ENCODE measurements at regions of chr11 and their contacts with region 1.

Region 1: DNA sequence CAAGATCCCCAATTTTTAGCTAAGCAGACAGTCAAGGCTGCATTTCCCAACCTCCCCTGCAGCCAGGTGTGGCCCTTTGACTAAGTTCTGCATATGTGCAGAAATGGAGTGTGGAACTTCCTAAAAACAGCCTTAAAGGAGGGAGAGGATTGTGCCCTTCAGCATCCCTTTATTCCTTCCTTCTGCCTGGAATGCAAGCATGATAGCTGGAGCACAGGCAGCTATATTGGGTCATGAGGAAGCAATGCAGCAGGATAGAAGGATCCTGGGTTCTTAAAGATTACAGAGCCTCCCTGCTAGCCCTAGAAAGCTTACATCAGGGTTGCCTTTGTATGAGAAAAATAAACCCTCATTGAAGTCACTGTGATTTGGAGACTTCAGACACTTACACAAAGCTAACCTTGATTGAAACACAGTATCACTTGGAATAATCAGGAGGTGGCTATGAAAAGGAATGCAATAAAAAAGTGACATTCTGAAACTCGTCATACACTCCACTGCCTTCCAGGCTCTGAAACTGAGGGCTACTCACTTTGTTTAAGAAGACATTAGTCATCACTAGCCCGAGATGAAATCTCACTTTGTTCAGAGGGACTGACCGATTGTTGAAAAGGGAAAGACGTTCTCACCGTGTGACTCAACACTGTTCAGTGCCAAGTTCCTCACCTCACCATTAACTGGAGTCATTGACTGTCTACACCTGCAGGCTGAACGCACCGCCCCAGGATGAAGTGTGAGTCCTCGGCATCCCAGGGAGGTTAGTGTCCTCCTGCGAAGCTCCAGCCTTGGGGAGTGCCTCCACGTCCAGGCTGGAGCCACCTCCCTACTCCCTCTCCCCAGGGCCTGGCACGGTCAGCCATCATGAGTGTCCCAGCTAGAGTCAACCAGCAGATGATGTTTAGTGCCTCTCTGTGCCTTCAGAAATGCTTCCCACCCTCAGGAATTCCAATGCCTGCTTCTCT is 30.2 kb downstream of the FADD start:
- DNase-seq: peak; percentile 96 to 100
- H3K4me3 ChIP-seq: no peak overlapping the region
- H3K27ac ChIP-seq: peak overlapping the region; percentile 97
- H3K4me1 ChIP-seq: peaks cover 24% of the 10 kb centered on the region
- H3K27me3 ChIP-seq: no peaks in the 10 kb centered on the region
- CTCF ChIP-seq: no peak

Region 2: DNA sequence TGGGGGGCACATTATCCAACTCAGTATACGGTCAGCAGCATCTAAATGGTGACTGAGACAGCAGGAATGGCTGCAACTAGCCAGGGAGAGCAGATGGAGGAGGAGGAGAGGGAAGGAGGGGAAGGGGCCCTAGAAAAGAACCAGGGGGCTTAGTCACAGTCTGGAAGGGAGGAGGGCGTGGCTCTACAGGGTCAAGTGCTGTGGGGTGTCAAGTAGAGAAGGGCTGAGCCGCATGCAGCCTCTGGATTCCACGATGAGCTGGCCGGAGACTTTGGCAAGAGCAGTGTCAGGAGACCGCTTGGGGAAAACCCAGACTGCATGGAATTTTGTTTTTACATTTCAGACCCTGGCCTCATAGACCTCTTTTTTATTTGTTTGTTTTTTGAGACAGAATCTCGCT is 11.4 kb after region 1 on chr11:
- CTCF ChIA-PET with region 1: no interaction called
- POLR2A ChIA-PET with region 1: interaction called, 7 read pairs
- intact Hi-C with region 1: loop called (anchors 1 kb)
- DNase-seq: peak; percentile 69 to 81
- H3K4me3 ChIP-seq: no peak overlapping the region
- H3K27ac ChIP-seq: peak overlapping the region; percentile 83
- H3K4me1 ChIP-seq: peaks cover 44% of the 10 kb centered on the region
- H3K27me3 ChIP-seq: no peaks in the 10 kb centered on the region
- CTCF ChIP-seq: no peak

Region 3: DNA sequence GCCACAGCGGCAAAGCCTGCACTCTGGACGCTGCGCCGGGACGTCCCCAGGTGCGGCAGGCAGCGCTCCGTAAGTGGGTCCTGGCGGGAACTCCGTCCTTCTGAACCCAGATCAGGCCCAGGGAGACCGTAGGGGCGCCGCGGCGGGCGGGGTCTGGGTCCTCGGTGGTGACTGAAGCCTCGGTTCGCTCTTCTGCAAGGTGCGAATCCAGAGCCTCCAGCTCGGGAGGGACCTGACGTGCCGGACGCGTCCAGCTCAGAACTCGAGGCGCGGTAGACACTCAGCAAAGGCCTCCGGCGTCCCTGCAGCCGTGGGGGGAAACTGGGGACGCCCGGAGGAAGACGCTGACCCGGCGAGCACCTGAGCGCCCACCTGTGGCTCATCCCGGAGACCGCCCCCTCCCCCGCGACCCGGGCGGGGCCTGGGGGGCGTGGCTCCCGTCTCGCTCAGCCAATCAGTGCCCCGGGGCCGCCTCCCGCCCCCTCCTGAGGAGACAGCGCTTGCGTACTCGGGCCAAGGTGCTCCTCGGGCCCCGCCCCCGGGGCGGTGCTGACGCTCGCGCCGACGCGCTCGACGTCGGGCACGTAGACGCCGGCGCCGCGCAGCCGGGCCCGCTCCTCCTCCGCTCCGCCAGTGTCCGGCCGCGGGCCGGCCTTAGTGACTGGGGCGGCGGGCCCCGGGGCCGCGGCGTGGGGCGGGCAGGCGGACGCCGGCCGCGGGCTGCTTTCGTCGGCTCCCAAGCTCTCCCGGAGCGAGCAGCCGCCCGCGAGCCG is 37.0 kb after region 1 on chr11 and contains the start of gene PPFIA1:
- CTCF ChIA-PET with region 1: no interaction called
- POLR2A ChIA-PET with region 1: no interaction called
- intact Hi-C with region 1: loop called (anchors 1 kb)
- DNase-seq: peak; percentile 90 to 99
- H3K4me3 ChIP-seq: peak within 1 kb of the TSS; percentile 85
- H3K27ac ChIP-seq: peak within 1 kb of the TSS; percentile 31
- H3K4me1 ChIP-seq: peaks cover 25% of the 10 kb centered on the region
- H3K27me3 ChIP-seq: no peaks in the 10 kb centered on the region
- CTCF ChIP-seq: no peak
- total RNA-seq, gene PPFIA1: 81.1 and 86.8 TPM in 2 replicates

Region 4: GRCh38 chr11:70297341-70297740 is 64.0 kb after region 1 on chr11:
- CTCF ChIA-PET with region 1: no interaction called
- POLR2A ChIA-PET with region 1: interaction called, 14 read pairs
- intact Hi-C with region 1: no loop called
- DNase-seq: peak in 1 of 2 experiments; percentile 83
- H3K4me3 ChIP-seq: no peak overlapping the region
- H3K27ac ChIP-seq: peak overlapping the region; percentile 12; the same call in 1 of the 2 replicates
- H3K4me1 ChIP-seq: peaks cover 13% of the 10 kb centered on the region
- H3K27me3 ChIP-seq: no peaks in the 10 kb centered on the region
- CTCF ChIP-seq: no peak

Region 5: DNA sequence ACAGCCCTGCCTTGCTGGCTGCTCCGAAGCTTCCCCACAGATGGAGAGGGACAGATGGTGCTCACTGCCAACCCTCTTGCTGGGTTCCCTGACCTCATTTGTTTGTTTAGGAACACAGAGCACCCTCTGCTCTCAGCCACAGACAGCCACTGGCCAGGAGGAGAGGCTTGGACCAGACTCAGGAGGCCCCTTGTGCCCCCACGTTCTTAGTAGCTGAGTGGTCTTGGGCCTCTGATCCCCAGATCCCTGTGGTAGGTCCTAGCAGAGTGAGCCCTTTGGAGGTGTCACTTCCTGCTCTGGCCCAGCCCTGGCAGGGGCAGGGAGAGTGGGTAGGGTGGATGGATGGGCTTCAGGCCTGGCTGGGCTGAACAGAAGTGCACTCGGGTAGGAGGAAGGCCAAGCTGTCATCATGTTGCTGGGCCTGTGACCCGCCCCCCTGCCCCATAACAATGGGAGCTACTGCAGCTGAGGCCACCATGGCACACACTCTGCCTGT is 1130.9 kb after region 1 on chr11:
- CTCF ChIA-PET with region 1: no interaction called
- POLR2A ChIA-PET with region 1: no interaction called
- intact Hi-C with region 1: no loop called
- DNase-seq: no peak
- H3K4me3 ChIP-seq: no peak overlapping the region
- H3K27ac ChIP-seq: no peak overlapping the region
- H3K4me1 ChIP-seq: no peaks in the 10 kb centered on the region
- H3K27me3 ChIP-seq: peaks cover 31% of the 10 kb centered on the region
- CTCF ChIP-seq: no peak